ENCODE measurements at regions of chr2 and their contacts with region 1.

Region 1: GRCh38 chr2:96174251-96175144 is 29.3 kb upstream of the DUSP2 start:
- DNase-seq: peak; percentile 83
- CTCF ChIP-seq: peak; percentile 86

Region 2: DNA sequence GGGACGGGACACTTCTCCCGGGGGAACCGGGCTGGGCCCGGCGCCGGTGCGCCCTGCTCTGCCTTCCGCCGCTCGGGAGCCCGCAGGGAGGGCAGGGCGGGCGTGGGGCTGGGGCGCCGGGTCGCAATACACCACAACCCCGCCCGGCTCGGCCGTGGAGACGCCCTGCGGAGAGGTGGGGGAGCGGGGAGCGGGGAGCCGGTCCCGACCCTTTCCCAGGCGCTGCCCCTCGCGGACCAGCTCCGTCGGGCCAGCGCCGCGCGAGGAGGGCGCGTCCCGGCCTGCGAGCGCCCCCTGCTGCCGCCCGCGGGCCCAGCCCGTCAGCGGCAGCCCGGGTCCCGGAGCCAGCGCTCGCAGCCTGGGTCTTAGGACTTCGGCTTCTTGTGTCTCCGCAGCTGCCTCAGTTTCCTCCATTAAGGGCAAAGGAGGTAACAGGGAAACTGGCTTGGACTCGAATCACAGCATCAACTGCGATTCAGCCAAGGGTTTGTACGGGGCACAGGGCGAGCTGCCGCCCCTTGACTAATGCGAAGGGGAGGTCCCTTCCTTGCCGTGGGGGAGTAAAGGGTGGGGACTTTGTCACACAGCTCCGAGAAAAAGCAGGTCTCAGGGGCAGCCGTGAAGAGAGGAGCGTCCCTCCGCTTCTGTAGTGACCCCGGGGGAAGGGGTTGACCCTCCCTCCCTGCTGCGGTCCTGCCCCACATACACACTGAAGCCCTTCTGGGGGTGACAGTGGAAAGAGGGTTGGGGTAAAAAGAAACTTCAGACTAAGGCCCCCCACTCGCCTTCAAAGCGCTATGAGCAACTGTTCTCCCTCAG is 57.4 kb before region 1 on chr2:
- CTCF ChIA-PET with region 1: interaction called, 39 read pairs
- POLR2A ChIA-PET with region 1: no interaction called
- DNase-seq: peak; percentile 92
- CTCF ChIP-seq: peak; percentile 90

Region 3: GRCh38 chr2:96138179-96139145 is 36.0 kb before region 1 on chr2 and contains the start of gene ASTL:
- CTCF ChIA-PET with region 1: interaction called, 658 read pairs
- POLR2A ChIA-PET with region 1: interaction called, 57 read pairs
- DNase-seq: peak; percentile 78
- CTCF ChIP-seq: peak; percentile 77

Region 4: GRCh38 chr2:96157651-96158553 is 16.6 kb before region 1 on chr2:
- CTCF ChIA-PET with region 1: interaction called, 658 read pairs
- POLR2A ChIA-PET with region 1: interaction called, 3 read pairs
- DNase-seq: peak; percentile 87
- CTCF ChIP-seq: no peak

Region 5: GRCh38 chr2:96198921-96199320 is 24.4 kb after region 1 on chr2:
- CTCF ChIA-PET with region 1: interaction called, 43 read pairs
- POLR2A ChIA-PET with region 1: no interaction called
- DNase-seq: no peak
- CTCF ChIP-seq: no peak

Region 6: GRCh38 chr2:96233880-96234316 is 59.4 kb after region 1 on chr2:
- CTCF ChIA-PET with region 1: interaction called, 19 read pairs
- POLR2A ChIA-PET with region 1: no interaction called
- DNase-seq: peak; percentile 70
- CTCF ChIP-seq: peak; percentile 45

Region 7: GRCh38 chr2:96509114-96509846 is 334.8 kb after region 1 on chr2:
- CTCF ChIA-PET with region 1: interaction called, 10 read pairs
- POLR2A ChIA-PET with region 1: no interaction called
- DNase-seq: peak; percentile 86
- CTCF ChIP-seq: peak; percentile 98

Measured in GM10248 (cell line).